CD4-positive, alpha-beta T cell (primary cell): ENCODE measurements at regions of chr10 and their contacts with region 1.

Region 1: GRCh38 chr10:6348096-6348874 is 145.6 kb downstream of the PFKFB3 start:
- DNase-seq: peak; percentile 67 to 96 (median 80)
- ATAC-seq: peak; percentile 89
- H3K4me3 ChIP-seq: peak overlapping the region; percentile 30
- H3K4me3 Mint-ChIP-seq: peak overlapping the region; percentile 72
- H3K27ac ChIP-seq: peak overlapping the region; percentile 58 to 80
- H3K27ac Mint-ChIP-seq: peak overlapping the region; percentile 92
- H3K4me1 ChIP-seq: peaks cover 28% of the 10 kb centered on the region
- H3K4me1 Mint-ChIP-seq: peaks cover 59% of the 10 kb centered on the region
- H3K27me3 ChIP-seq: no peaks in the 10 kb centered on the region
- H3K27me3 Mint-ChIP-seq: no peaks in the 10 kb centered on the region
- CTCF ChIP-seq: no peak

Region 2: GRCh38 chr10:6144406-6145165 is 203.7 kb before region 1 on chr10:
- CTCF ChIA-PET with region 1: no interaction called
- POLR2A ChIA-PET with region 1: interaction called, 14 read pairs
- intact Hi-C with region 1: no loop called
- DNase-seq: peak; percentile 71 to 94 (median 85)
- ATAC-seq: peak; percentile 90
- H3K4me3 ChIP-seq: peak overlapping the region; percentile 75
- H3K4me3 Mint-ChIP-seq: peak overlapping the region; percentile 89
- H3K27ac ChIP-seq: peak overlapping the region; percentile 70 to 77
- H3K27ac Mint-ChIP-seq: peak overlapping the region; percentile 90
- H3K4me1 ChIP-seq: peaks cover 89% of the 10 kb centered on the region
- H3K4me1 Mint-ChIP-seq: peaks cover 66% of the 10 kb centered on the region
- H3K27me3 ChIP-seq: no peaks in the 10 kb centered on the region
- H3K27me3 Mint-ChIP-seq: no peaks in the 10 kb centered on the region
- CTCF ChIP-seq: no peak

Region 3: GRCh38 chr10:6171881-6172695 is 176.2 kb before region 1 on chr10:
- CTCF ChIA-PET with region 1: no interaction called
- POLR2A ChIA-PET with region 1: interaction called, 11 read pairs
- intact Hi-C with region 1: no loop called
- DNase-seq: peak in 4 of 14 experiments; percentile 15 to 76 (median 57)
- ATAC-seq: no peak
- H3K4me3 ChIP-seq: no peak overlapping the region
- H3K4me3 Mint-ChIP-seq: peak overlapping the region; percentile 18
- H3K27ac ChIP-seq: no peak overlapping the region
- H3K27ac Mint-ChIP-seq: peak overlapping the region; percentile 83
- H3K4me1 ChIP-seq: peaks cover 84% of the 10 kb centered on the region
- H3K4me1 Mint-ChIP-seq: peaks cover 85% of the 10 kb centered on the region
- H3K27me3 ChIP-seq: no peaks in the 10 kb centered on the region
- H3K27me3 Mint-ChIP-seq: no peaks in the 10 kb centered on the region
- CTCF ChIP-seq: no peak

Region 4: DNA sequence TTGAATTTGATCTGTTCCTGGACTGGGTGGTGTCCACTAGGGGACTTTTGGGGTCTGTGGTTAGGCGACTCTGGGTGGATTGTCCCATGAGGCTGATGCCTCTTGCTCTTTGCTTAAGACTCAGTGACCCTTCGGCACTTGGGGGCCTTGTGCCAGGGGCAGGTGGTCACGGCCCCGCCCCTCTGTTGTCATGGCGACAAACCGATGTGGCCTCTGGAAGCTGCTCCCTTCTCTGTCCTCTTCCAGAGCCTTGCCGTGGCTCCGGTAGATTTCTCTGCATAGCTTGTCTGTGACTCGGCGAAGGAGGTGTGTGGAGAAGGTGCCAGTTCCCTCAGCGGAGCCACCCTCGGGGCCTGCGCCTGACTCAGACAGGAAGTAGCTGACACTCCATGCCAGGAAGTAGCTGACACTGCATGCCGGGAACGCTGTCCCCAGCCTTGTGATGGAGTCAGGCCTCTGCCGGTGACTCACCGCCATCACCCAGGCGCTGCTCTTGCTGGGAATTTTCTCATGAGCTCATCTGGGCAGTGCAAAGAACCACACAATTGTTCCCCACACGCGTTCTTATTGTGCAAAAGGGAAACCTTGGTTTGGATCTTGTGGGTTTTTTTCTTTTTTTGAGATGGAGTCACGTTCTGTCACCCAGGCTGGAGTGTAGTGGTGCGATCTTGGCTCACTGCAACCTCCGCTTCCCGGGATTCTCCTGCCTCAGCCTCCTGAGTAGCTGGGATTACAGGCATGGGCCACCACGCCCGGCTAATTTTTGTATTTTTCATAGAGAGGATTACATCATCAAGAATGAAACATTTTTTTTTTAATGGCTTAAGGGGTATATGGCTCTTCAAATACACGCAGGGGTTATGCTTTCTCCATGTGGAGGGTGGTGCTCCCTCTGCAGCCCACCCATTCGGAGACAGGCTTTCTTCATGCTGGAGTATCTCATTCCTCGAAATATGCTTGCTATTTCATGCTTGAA is 73.0 kb before region 1 on chr10:
- CTCF ChIA-PET with region 1: interaction called, 8 read pairs
- POLR2A ChIA-PET with region 1: interaction called, 22 read pairs
- intact Hi-C with region 1: loop called in 1 of 2 experiments (anchors 2 kb)
- DNase-seq: peak; percentile 63 to 97 (median 85)
- ATAC-seq: peak; percentile 89
- H3K4me3 ChIP-seq: peak overlapping the region; percentile 34
- H3K4me3 Mint-ChIP-seq: peak overlapping the region; percentile 43
- H3K27ac ChIP-seq: peak overlapping the region; percentile 15 to 73
- H3K27ac Mint-ChIP-seq: peak overlapping the region; percentile 91
- H3K4me1 ChIP-seq: peaks cover 42% of the 10 kb centered on the region
- H3K4me1 Mint-ChIP-seq: peaks cover 35% of the 10 kb centered on the region
- H3K27me3 ChIP-seq: no peaks in the 10 kb centered on the region
- H3K27me3 Mint-ChIP-seq: no peaks in the 10 kb centered on the region
- CTCF ChIP-seq: no peak

Region 5: DNA sequence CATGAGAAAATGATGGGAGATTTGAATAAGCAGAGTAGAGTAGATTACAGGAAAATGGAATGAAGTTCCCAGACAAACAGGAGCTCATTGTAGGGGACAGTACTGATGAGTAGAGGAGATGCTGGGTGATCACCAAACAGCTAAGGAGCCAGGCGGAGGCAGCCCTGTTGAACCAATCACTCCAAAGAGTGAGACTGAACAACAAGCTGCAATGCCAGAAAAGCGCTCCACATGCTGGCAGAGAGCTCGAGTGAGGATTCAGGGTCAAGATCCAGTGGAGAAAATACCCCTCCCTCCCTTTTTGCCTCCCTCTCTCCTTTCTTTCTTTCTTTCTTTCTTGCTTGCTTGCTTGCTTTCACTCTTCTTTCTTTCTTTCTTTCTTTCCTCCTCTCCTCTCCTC is 12.3 kb before region 1 on chr10:
- CTCF ChIA-PET with region 1: no interaction called
- POLR2A ChIA-PET with region 1: interaction called, 11 read pairs
- intact Hi-C with region 1: no loop called
- DNase-seq: no peak
- ATAC-seq: no peak
- H3K4me3 ChIP-seq: no peak overlapping the region
- H3K4me3 Mint-ChIP-seq: no peak overlapping the region
- H3K27ac ChIP-seq: no peak overlapping the region
- H3K27ac Mint-ChIP-seq: no peak overlapping the region
- H3K4me1 ChIP-seq: no peaks in the 10 kb centered on the region
- H3K4me1 Mint-ChIP-seq: no peaks in the 10 kb centered on the region
- H3K27me3 ChIP-seq: no peaks in the 10 kb centered on the region
- H3K27me3 Mint-ChIP-seq: no peaks in the 10 kb centered on the region
- CTCF ChIP-seq: no peak

Region 6: GRCh38 chr10:6382081-6382480 is 33.8 kb after region 1 on chr10:
- CTCF ChIA-PET with region 1: no interaction called
- POLR2A ChIA-PET with region 1: interaction called, 35 read pairs
- intact Hi-C with region 1: loop called in 1 of 2 experiments (anchors 1 kb)
- DNase-seq: peak in 13 of 14 experiments; percentile 7 to 71 (median 52)
- ATAC-seq: peak; percentile 91
- H3K4me3 ChIP-seq: peak overlapping the region; percentile 12
- H3K4me3 Mint-ChIP-seq: peak overlapping the region; percentile 67
- H3K27ac ChIP-seq: no peak overlapping the region
- H3K27ac Mint-ChIP-seq: peak overlapping the region; percentile 55
- H3K4me1 ChIP-seq: peaks cover 13% of the 10 kb centered on the region
- H3K4me1 Mint-ChIP-seq: peaks cover 20% of the 10 kb centered on the region
- H3K27me3 ChIP-seq: no peaks in the 10 kb centered on the region
- H3K27me3 Mint-ChIP-seq: no peaks in the 10 kb centered on the region
- CTCF ChIP-seq: no peak

Region 7: GRCh38 chr10:6409971-6410651 is 61.8 kb after region 1 on chr10:
- CTCF ChIA-PET with region 1: interaction called, 7 read pairs
- POLR2A ChIA-PET with region 1: interaction called, 15 read pairs
- intact Hi-C with region 1: no loop called
- DNase-seq: peak in 13 of 14 experiments; percentile 19 to 86 (median 39)
- ATAC-seq: peak; percentile 95
- H3K4me3 ChIP-seq: peak overlapping the region; percentile 34
- H3K4me3 Mint-ChIP-seq: peak overlapping the region; percentile 78
- H3K27ac ChIP-seq: peak overlapping the region; percentile 51 to 78
- H3K27ac Mint-ChIP-seq: peak overlapping the region; percentile 94
- H3K4me1 ChIP-seq: peaks cover 33% of the 10 kb centered on the region
- H3K4me1 Mint-ChIP-seq: peaks cover 57% of the 10 kb centered on the region
- H3K27me3 ChIP-seq: no peaks in the 10 kb centered on the region
- H3K27me3 Mint-ChIP-seq: no peaks in the 10 kb centered on the region
- CTCF ChIP-seq: no peak